ENCODE measurements at regions of chr17 and their contacts with region 1.

Region 1: GRCh38 chr17:62859146-62859545 is 51.0 kb upstream of the MARCHF10 start:
- DNase-seq: peak; percentile 44
- H3K4me3 ChIP-seq: no peak overlapping the region
- CTCF ChIP-seq: no peak

Region 2: GRCh38 chr17:62911114-62911513 is 52.0 kb after region 1 on chr17:
- in situ Hi-C with region 1: loop called (anchors 5 kb)
- DNase-seq: no peak
- H3K4me3 ChIP-seq: no peak overlapping the region
- CTCF ChIP-seq: no peak

Measured in astrocyte of the cerebellum (primary cell).